HEK293 (cell line): ENCODE measurements at regions of chr19 and their contacts with region 1.

Region 1: GRCh38 chr19:4638828-4639530 is at the start of gene TNFAIP8L1:
- H3K4me3 ChIP-seq: peak within 1 kb of the TSS; percentile 36
- H3K27ac ChIP-seq: peak within 1 kb of the TSS; percentile 51; the same call in 1 of the 2 replicates
- H3K4me1 ChIP-seq: no peaks in the 10 kb centered on the region; the same call in 1 of the 2 replicates
- CTCF ChIP-seq: no peak

Region 2: DNA sequence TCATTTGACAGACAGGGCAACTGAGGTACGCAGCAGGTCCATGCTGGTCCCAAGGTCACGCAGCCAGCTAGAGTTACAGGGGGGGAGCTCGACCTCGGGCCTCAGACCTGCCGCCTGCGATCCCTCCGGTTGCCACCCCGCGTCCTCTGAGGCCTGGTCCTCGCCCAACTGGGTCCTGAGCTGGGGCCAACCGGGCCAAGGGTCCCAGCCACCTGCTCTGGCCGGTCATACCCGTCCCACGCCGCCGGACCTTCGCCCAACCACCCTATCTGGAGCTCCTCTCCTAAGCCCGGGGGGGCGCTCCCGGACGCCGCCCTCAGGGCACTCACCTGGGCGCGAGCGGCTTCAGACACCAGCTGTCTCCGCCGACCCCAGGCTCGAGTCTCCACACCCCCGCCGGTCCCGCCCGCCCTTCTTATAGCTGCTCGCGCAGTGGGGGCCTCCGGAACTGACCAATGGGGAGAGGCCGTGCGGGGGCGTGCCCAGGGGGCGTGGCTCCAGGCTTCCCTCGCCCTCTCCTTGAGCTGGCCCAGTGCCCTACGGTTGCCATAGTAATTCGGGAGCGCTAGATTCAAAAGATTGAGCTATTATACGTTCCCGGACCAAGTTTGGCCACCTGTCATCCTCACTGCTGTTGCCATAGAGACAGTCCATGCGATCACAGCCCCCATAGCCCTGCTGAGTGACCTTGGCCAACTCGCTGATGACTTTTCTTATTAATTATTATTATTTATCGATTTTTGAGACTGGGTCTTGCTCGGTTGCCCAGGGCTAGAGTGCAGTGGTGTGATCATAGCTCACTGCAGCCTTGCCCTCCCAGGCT is 103.9 kb before region 1 on chr19 and contains the start of gene PLIN5:
- CTCF ChIA-PET with region 1: interaction called, 11 read pairs
- POLR2A ChIA-PET with region 1: no interaction called
- H3K4me3 ChIP-seq: no peak within 1 kb of the TSS
- H3K27ac ChIP-seq: no peak within 1 kb of the TSS
- H3K4me1 ChIP-seq: no peaks in the 10 kb centered on the region
- CTCF ChIP-seq: no peak

Region 3: GRCh38 chr19:4567584-4568071 is 71.4 kb before region 1 on chr19:
- CTCF ChIA-PET with region 1: interaction called, 48 read pairs
- POLR2A ChIA-PET with region 1: no interaction called
- H3K4me3 ChIP-seq: no peak overlapping the region
- H3K27ac ChIP-seq: no peak overlapping the region
- H3K4me1 ChIP-seq: no peaks in the 10 kb centered on the region
- CTCF ChIP-seq: peak; percentile 92

Region 4: DNA sequence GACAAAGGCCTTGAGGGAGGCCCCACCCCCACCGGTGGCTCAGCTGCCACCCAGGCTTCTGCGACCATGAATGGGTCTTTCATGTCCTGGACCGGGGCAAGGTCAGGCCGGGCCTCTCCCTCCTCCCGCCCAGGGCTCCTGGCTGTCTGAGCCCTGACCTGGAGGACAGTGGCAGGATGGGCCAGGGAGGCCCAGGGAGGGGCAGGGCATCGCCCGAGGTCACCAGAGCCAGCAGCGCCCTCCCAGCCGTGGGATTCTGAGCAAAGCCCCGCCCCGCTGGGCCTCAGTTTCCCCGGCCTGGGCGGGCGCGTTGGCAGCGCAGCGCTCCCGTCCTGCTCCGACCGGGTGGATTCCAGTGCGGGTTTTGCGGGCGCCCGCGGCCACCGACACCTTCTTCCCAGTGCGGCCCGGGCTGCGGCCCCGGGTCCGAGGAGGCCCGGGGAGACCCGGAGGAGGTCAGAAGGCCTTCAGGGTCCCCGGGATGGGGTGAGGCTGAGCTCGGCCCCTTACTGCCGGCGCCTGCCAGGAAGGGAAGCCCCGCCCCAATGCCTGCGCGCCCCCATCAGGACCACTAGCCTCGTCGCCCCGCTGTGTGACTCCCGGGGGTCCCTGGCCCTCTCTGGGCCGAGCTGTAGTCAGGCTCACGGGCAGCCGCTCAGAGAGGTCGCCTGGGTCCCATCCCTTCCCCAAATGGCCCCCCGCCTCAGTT is 54.9 kb before region 1 on chr19:
- CTCF ChIA-PET with region 1: interaction called, 19 read pairs
- POLR2A ChIA-PET with region 1: no interaction called
- H3K4me3 ChIP-seq: peak overlapping the region; percentile 40
- H3K27ac ChIP-seq: no peak overlapping the region
- H3K4me1 ChIP-seq: no peaks in the 10 kb centered on the region; the same call in 1 of the 2 replicates
- CTCF ChIP-seq: no peak